Left ventricle myocardium superior (tissue), 1 donor: ENCODE measurements at regions of chr9 and their contacts with region 1.

Region 1: DNA sequence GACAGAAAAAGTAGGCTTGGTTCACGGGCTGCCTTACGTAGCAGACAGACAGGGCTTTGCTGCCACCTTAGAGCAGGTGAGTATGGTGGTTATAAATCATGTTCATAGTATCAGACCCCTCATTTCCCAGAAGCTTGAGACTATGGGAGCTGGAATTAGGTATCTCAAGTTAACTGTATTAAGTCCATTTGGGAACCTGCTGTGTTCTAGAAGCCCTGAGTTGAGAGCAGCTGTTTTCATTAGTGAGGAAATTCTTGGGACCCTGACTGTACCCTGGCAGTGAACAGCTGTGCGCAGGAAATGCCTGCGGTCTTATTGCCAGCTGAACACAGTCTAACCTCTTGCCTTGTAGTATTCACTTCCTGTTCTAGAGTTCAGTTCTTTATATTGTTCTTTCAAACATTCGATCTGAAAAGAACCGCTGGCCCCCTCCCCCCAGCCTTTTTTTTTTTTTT is 29.8 kb downstream of the UGCG start:
- DNase-seq: peak; percentile 50
- ATAC-seq: peak; percentile 84

Region 2: GRCh38 chr9:111375817-111376564 is 550.5 kb before region 1 on chr9:
- intact Hi-C with region 1: no loop called
- DNase-seq: no peak
- ATAC-seq: no peak

Region 3: GRCh38 chr9:111815277-111816070 is 111.0 kb before region 1 on chr9:
- intact Hi-C with region 1: no loop called
- DNase-seq: no peak
- ATAC-seq: no peak

Region 4: GRCh38 chr9:111957856-111958652 is 31.6 kb after region 1 on chr9:
- intact Hi-C with region 1: loop called (anchors 1 kb)
- DNase-seq: no peak
- ATAC-seq: peak; percentile 65